CD4-positive, alpha-beta memory T cell (primary cell): ENCODE measurements at regions of chr13 and their contacts with region 1.

Region 1: DNA sequence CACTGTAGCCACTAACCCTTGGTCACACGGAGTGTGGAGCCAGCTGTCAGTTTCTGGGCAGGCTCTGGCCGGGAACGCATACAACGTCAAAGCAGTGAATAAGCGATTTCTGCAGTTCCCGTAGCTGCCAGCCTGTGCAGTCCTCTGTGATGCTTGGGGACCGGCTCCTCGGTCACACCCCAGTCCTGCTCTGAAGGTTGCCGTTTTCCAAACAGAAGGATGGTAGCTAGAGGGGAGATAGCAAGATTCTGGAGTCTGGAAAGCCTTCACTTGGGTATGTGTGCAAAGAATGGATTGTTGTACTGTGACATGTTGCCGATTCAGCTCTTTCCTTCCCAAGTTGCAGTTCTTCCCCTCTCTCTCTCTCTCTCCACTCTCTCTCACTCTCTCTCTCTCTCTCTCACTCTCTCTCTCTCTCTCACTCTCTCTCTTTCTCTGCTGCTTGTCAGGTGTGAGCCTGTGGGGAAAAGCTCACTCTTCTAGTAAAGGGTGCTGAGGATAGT is 38.7 kb upstream of the C1QTNF9 start:
- DNase-seq: peak; percentile 74 to 80 (median 76)
- H3K4me3 ChIP-seq: peak overlapping the region; percentile 14 to 66
- H3K4me3 Mint-ChIP-seq: peak overlapping the region; percentile 83 to 99 (median 92)
- H3K27ac ChIP-seq: peak overlapping the region; percentile 90
- H3K27ac Mint-ChIP-seq: peak overlapping the region; percentile 98 to 100 (median 99)
- H3K4me1 ChIP-seq: peaks cover 98% of the 10 kb centered on the region
- H3K4me1 Mint-ChIP-seq: peaks cover 72 to 97% (median 85%) of the 10 kb centered on the region in 4 donors
- H3K27me3 ChIP-seq: no peaks in the 10 kb centered on the region
- H3K27me3 Mint-ChIP-seq: peaks cover 2% of the 10 kb centered on the region in 2 donors

Region 2: DNA sequence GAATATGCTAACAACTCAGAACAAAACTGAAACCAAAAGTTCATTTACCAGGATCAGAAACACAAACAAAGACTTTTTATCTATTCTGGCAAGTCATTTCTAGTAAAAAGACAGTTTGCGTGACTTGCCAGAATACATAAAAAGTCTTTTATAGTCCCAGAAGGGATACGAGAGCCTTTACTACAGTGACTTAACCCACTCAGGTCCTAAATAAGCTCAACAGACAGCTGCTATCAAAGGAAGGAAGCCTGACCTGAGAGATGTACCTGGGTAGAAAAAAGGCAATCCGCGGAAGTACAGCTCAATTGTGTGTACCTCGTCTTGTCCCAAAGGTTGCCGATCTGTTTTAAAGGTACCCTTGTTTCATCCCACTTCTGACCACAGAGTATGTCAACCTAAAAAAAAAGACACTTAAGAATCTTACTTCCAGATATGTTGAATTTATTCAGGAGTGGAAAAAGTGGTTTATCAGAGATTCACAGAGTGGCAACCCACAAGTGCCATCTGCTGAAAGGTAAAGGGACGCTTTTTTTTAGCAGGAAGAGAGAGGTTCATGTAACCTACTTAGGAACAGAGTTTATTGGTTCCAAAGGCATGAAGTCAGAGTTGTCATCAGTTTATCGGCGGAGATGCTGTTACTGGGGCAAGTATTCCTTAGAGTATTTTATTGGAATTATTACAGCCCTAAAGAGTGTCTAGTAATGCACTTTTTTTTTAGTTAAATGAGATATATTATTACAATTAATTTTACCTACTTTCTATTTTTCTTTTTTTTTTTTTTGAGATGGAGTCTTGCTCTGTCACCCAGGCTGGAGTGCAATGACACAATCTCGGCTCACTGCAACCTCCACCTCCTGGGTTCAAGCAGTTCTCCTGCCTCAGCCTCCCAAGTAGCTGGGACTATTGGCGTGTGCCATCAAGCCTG is 303.7 kb before region 1 on chr13:
- CTCF ChIA-PET with region 1: no interaction called
- POLR2A ChIA-PET with region 1: interaction called, 3 read pairs
- intact Hi-C with region 1: loop called (anchors 2 kb)
- DNase-seq: peak; percentile 49 to 63 (median 60)
- H3K4me3 ChIP-seq: peak overlapping the region; percentile 37 to 76
- H3K4me3 Mint-ChIP-seq: peak overlapping the region; percentile 74 to 93 (median 84)
- H3K27ac ChIP-seq: peak overlapping the region; percentile 68
- H3K27ac Mint-ChIP-seq: peak overlapping the region; percentile 80 to 97 (median 94)
- H3K4me1 ChIP-seq: peaks cover 10% of the 10 kb centered on the region
- H3K4me1 Mint-ChIP-seq: peaks cover 10 to 28% (median 18%) of the 10 kb centered on the region in 4 donors
- H3K27me3 ChIP-seq: no peaks in the 10 kb centered on the region
- H3K27me3 Mint-ChIP-seq: no peaks in the 10 kb centered on the region

Region 3: DNA sequence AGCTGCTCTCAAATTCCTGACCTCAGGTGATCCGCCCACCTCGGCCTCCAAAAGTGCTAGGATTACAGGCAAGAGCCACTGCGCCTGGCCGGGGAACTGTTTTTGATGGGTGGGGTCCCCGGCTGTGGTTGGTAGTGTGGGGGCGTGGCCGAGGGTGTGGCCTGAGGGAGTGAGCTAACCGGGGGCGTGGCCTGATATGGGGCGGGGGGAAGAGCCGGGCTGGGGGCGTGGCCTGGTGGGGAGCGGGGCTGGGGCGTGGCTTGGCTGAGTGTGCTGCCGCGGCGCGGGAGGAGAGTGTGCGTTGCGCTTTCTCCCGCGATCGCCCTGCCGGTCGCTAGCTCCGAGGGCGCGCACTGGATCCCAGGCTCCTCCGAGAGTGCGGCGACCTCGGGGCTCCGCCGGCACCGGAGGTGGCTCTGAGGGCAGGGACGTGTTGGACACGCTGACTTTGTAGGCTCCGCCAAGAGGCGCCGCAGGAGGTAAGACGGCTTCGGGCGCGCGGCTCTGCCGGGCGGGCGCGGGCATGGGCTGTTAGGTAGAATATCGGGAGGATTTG is 110.2 kb before region 1 on chr13 and contains the start of gene SPATA13:
- CTCF ChIA-PET with region 1: interaction called, 5 read pairs
- POLR2A ChIA-PET with region 1: interaction called, 10 read pairs
- intact Hi-C with region 1: loop called (anchors 2 kb)
- DNase-seq: peak; percentile 88 to 90 (median 88)
- H3K4me3 ChIP-seq: peak within 1 kb of the TSS; percentile 69
- H3K4me3 Mint-ChIP-seq: peak within 1 kb of the TSS; percentile 78 to 90 (median 86)
- H3K27ac ChIP-seq: peak within 1 kb of the TSS; percentile 19
- H3K27ac Mint-ChIP-seq: peak within 1 kb of the TSS in 5 of 7 donors; percentile 32 to 83 (median 72)
- H3K4me1 ChIP-seq: peaks cover 19% of the 10 kb centered on the region
- H3K4me1 Mint-ChIP-seq: peaks cover 9 to 16% (median 12%) of the 10 kb centered on the region in 4 donors
- H3K27me3 ChIP-seq: no peaks in the 10 kb centered on the region
- H3K27me3 Mint-ChIP-seq: peaks cover 0 to 2% of the 10 kb centered on the region in 2 donors
- total RNA-seq, gene SPATA13: 107 to 110 TPM

Region 4: GRCh38 chr13:24254146-24254841 is 16.4 kb before region 1 on chr13:
- CTCF ChIA-PET with region 1: interaction called, 310 read pairs
- POLR2A ChIA-PET with region 1: interaction called, 1,361 read pairs
- intact Hi-C with region 1: loop called (anchors 1 kb)
- DNase-seq: peak; percentile 78 to 93 (median 83)
- H3K4me3 ChIP-seq: peak overlapping the region; percentile 94 to 98
- H3K4me3 Mint-ChIP-seq: peak overlapping the region; percentile 92 to 99 (median 97)
- H3K27ac ChIP-seq: peak overlapping the region; percentile 87
- H3K27ac Mint-ChIP-seq: peak overlapping the region; percentile 95 to 100 (median 97)
- H3K4me1 ChIP-seq: peaks cover 88% of the 10 kb centered on the region
- H3K4me1 Mint-ChIP-seq: peaks cover 62 to 99% (median 81%) of the 10 kb centered on the region in 4 donors
- H3K27me3 ChIP-seq: no peaks in the 10 kb centered on the region
- H3K27me3 Mint-ChIP-seq: no peaks in the 10 kb centered on the region

Region 5: DNA sequence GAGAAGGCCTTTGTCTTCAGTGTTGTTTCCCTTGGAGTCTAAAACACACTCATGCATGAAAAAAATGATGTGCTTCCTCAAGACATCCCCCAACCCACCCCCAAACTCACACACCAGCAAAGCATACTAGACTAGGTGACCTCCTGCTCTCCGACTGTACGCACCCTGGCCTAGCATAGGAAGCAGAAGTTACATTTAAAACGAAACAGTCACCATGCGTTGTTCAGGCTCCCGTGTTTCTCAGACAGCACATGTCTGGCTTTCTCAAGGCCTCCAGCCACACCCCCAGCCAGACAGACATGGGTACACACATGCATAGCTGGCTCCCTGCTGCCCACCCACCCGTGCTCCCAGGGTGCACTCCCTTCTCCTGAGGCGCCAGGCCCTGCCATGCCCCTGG is 10.0 kb after region 1 on chr13:
- CTCF ChIA-PET with region 1: interaction called, 17 read pairs
- POLR2A ChIA-PET with region 1: interaction called, 1,361 read pairs
- intact Hi-C with region 1: no loop called
- DNase-seq: no peak
- H3K4me3 ChIP-seq: no peak overlapping the region
- H3K4me3 Mint-ChIP-seq: no peak overlapping the region
- H3K27ac ChIP-seq: peak overlapping the region; percentile 20
- H3K27ac Mint-ChIP-seq: peak overlapping the region in 6 of 7 donors; percentile 52 to 99 (median 70)
- H3K4me1 ChIP-seq: peaks cover 70% of the 10 kb centered on the region
- H3K4me1 Mint-ChIP-seq: peaks cover 46 to 77% (median 59%) of the 10 kb centered on the region in 4 donors
- H3K27me3 ChIP-seq: no peaks in the 10 kb centered on the region
- H3K27me3 Mint-ChIP-seq: no peaks in the 10 kb centered on the region

Region 6: DNA sequence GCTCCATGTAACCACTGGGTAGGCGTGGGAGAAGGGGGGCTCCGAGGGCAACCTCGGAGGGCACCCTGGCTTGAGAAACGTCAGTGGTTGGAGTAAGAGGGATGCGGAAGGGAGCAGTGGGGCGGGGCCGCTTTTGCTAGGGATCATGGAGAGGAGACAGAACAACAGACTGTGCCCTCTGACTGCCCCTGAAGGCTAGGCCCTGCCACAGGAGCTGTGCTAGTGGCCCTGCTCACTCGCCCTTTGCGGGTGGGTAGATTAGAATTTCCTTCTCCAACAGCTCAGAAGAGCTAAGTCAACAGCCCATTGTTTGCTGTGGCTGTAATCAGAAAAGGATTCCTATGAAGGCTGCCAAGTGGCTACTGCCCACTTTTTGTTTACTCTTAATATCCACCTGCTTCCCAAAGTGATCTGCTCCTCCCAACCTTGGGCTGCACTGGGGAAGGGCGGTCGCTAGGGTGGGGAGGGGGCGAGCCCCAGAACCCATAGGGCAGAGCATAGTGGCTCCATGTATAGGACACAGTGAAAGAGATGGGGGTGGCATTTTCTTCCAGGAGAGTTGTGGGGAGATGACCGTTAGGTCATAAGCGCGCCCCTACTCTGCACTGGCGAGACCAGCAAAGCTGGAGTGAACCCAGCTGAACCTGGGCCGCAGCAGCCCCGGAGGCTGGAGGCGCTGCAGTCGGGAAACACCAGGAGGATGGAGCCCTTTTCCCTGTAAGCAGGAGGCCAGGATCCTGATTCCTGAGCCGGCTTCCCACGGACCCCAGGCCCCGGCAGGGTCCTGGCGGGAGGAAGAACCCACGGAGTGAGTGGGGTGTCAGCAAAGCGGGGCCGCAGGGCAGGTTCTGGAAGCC is 36.7 kb after region 1 on chr13:
- CTCF ChIA-PET with region 1: no interaction called
- POLR2A ChIA-PET with region 1: no interaction called
- intact Hi-C with region 1: loop called (anchors 5 kb)
- DNase-seq: no peak
- H3K4me3 ChIP-seq: no peak overlapping the region
- H3K4me3 Mint-ChIP-seq: no peak overlapping the region
- H3K27ac ChIP-seq: no peak overlapping the region
- H3K27ac Mint-ChIP-seq: peak overlapping the region in 3 of 7 donors; percentile 35 to 51 (median 47)
- H3K4me1 ChIP-seq: no peaks in the 10 kb centered on the region
- H3K4me1 Mint-ChIP-seq: peaks cover 0 to 5% (median 4%) of the 10 kb centered on the region in 4 donors
- H3K27me3 ChIP-seq: no peaks in the 10 kb centered on the region
- H3K27me3 Mint-ChIP-seq: no peaks in the 10 kb centered on the region

Region 7: DNA sequence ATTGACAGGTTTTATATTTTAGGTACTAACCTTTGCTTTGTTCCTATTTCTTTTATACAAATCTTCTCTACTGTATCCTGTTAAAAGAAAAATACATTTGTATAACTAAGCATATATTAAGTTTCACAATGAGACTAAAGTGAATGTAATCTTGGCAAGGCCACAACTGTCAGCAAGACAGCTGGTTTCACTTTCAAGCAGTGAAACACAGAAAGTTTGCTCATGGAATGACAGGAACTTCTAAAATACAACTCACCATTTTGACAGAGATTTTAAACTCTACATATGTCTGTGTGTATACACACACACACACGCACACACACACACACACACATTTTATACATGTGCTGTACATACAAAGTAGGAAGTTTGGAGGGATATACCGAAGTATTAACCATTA is 188.5 kb after region 1 on chr13:
- CTCF ChIA-PET with region 1: no interaction called
- POLR2A ChIA-PET with region 1: no interaction called
- intact Hi-C with region 1: loop called (anchors 10 kb)
- DNase-seq: no peak
- H3K4me3 ChIP-seq: no peak overlapping the region
- H3K4me3 Mint-ChIP-seq: peak overlapping the region in 2 of 8 donors; percentile 44 to 55
- H3K27ac ChIP-seq: no peak overlapping the region
- H3K27ac Mint-ChIP-seq: peak overlapping the region in 6 of 7 donors; percentile 3 to 84 (median 55)
- H3K4me1 ChIP-seq: peaks cover 9% of the 10 kb centered on the region
- H3K4me1 Mint-ChIP-seq: peaks cover 18 to 25% (median 20%) of the 10 kb centered on the region in 4 donors
- H3K27me3 ChIP-seq: no peaks in the 10 kb centered on the region
- H3K27me3 Mint-ChIP-seq: no peaks in the 10 kb centered on the region